ENCODE measurements at regions of chr19 and their contacts with region 1.

Region 1: GRCh38 chr19:35462476-35462953 is 14.5 kb downstream of the FFAR2 start:
- DNase-seq: peak in 8 of 9 donors; percentile 32 to 88 (median 82)
- ATAC-seq: peak; percentile 95
- H3K4me3 ChIP-seq: peak overlapping the region; percentile 6
- H3K4me3 Mint-ChIP-seq: peak overlapping the region; percentile 25 to 87 (median 76)
- H3K27ac ChIP-seq: peak overlapping the region; percentile 22
- H3K27ac Mint-ChIP-seq: peak overlapping the region; percentile 75 to 98 (median 91)
- H3K4me1 ChIP-seq: peaks cover 14 to 29% of the 10 kb centered on the region in 2 donors
- H3K4me1 Mint-ChIP-seq: peaks cover 30 to 37% (median 35%) of the 10 kb centered on the region in 7 donors
- H3K27me3 ChIP-seq: no peaks in the 10 kb centered on the region
- H3K27me3 Mint-ChIP-seq: peaks cover 0 to 8% (median 0%) of the 10 kb centered on the region in 5 donors

Region 2: GRCh38 chr19:35357867-35358573 is 104.5 kb before region 1 on chr19 and contains the start of gene FFAR3:
- CTCF ChIA-PET with region 1: interaction called, 37 read pairs
- POLR2A ChIA-PET with region 1: interaction called, 5 read pairs
- intact Hi-C with region 1: loop called in 1 of 2 experiments (anchors 1 kb)
- DNase-seq: peak in 4 of 9 donors; percentile 13 to 31 (median 22)
- ATAC-seq: peak; percentile 73
- H3K4me3 ChIP-seq: no peak within 1 kb of the TSS
- H3K4me3 Mint-ChIP-seq: peak within 1 kb of the TSS; percentile 2 to 71 (median 39)
- H3K27ac ChIP-seq: no peak within 1 kb of the TSS
- H3K27ac Mint-ChIP-seq: peak within 1 kb of the TSS in 4 of 9 donors; percentile 6 to 38 (median 11)
- H3K4me1 ChIP-seq: no peaks in the 10 kb centered on the region
- H3K4me1 Mint-ChIP-seq: peaks cover 7 to 12% (median 9%) of the 10 kb centered on the region in 7 donors
- H3K27me3 ChIP-seq: no peaks in the 10 kb centered on the region
- H3K27me3 Mint-ChIP-seq: peaks cover 0 to 13% (median 5%) of the 10 kb centered on the region in 5 donors
- total RNA-seq, gene FFAR3: 0.31 to 0.91 (median 0.72) TPM in 3 of 5 experiments, not detected in the others

Region 3: GRCh38 chr19:35421362-35421761 is 41.2 kb before region 1 on chr19:
- CTCF ChIA-PET with region 1: interaction called, 5 read pairs
- POLR2A ChIA-PET with region 1: interaction called, 3 read pairs
- intact Hi-C with region 1: loop called in 1 of 2 experiments (anchors 5 kb)
- DNase-seq: no peak
- ATAC-seq: no peak
- H3K4me3 ChIP-seq: no peak overlapping the region
- H3K4me3 Mint-ChIP-seq: no peak overlapping the region
- H3K27ac ChIP-seq: no peak overlapping the region
- H3K27ac Mint-ChIP-seq: no peak overlapping the region
- H3K4me1 ChIP-seq: no peaks in the 10 kb centered on the region
- H3K4me1 Mint-ChIP-seq: peaks cover 0 to 6% (median 0%) of the 10 kb centered on the region in 7 donors
- H3K27me3 ChIP-seq: peaks cover 0 to 6% of the 10 kb centered on the region in 2 donors
- H3K27me3 Mint-ChIP-seq: peaks cover 0 to 33% (median 16%) of the 10 kb centered on the region in 5 donors

Region 4: DNA sequence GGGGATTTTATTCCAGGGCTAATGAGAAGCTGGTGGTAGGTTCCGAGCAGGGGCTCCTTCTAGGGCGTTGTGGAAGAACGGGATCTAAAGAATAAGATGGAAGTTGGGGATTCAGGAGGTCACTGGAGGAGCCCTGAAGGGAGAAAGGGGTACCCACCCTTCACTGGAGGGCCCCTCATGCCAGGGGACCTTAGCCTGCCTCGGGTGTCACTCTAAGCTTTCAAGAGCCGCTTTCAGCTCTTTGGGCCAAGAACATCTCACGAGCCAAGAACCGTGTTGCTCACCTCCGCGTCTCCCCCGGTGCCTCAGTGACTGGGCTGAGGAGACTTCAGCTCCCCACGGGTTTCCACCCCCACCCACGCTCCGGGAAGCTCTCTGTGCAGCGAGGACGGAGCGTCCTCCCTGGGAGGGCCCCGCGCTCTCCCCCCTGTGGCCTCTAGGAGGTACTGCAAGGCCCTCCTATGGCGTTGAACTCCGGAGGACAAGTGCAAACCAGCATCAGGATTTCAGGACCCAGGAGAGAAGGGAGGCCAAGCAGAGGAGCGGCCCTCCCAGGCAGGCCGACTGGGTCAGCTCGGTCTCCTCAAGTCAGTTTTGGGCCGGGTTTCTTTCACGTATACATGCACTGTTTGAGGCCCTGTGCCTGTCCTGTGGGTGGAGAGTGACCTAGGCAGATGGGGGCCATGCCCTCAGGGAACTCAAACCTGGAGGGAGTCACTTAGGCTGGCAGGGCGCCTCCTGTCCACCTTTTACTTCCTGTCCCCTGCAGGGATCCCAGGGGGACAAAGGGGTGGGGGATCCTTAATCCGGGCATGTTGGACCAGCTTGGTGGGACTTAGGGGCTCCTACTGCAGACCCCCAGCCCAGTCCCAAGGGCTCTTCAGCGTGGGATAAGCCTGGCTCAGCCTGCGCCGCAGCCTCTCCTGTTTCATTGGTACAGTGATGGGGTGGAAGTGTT is 32.9 kb after region 1 on chr19:
- CTCF ChIA-PET with region 1: interaction called, 3 read pairs
- POLR2A ChIA-PET with region 1: no interaction called
- intact Hi-C with region 1: loop called in 1 of 2 experiments (anchors 1 kb)
- DNase-seq: peak; percentile 38 to 81 (median 60)
- ATAC-seq: peak; percentile 99
- H3K4me3 ChIP-seq: no peak overlapping the region
- H3K4me3 Mint-ChIP-seq: peak overlapping the region in 7 of 10 donors; percentile 17 to 62 (median 45)
- H3K27ac ChIP-seq: no peak overlapping the region
- H3K27ac Mint-ChIP-seq: peak overlapping the region in 3 of 9 donors; percentile 22 to 62 (median 47)
- H3K4me1 ChIP-seq: no peaks in the 10 kb centered on the region
- H3K4me1 Mint-ChIP-seq: peaks cover 0 to 9% (median 6%) of the 10 kb centered on the region in 7 donors
- H3K27me3 ChIP-seq: no peaks in the 10 kb centered on the region
- H3K27me3 Mint-ChIP-seq: peaks cover 0 to 12% (median 0%) of the 10 kb centered on the region in 5 donors